ENCODE measurements at regions of chr13 and their contacts with region 1.

Region 1: DNA sequence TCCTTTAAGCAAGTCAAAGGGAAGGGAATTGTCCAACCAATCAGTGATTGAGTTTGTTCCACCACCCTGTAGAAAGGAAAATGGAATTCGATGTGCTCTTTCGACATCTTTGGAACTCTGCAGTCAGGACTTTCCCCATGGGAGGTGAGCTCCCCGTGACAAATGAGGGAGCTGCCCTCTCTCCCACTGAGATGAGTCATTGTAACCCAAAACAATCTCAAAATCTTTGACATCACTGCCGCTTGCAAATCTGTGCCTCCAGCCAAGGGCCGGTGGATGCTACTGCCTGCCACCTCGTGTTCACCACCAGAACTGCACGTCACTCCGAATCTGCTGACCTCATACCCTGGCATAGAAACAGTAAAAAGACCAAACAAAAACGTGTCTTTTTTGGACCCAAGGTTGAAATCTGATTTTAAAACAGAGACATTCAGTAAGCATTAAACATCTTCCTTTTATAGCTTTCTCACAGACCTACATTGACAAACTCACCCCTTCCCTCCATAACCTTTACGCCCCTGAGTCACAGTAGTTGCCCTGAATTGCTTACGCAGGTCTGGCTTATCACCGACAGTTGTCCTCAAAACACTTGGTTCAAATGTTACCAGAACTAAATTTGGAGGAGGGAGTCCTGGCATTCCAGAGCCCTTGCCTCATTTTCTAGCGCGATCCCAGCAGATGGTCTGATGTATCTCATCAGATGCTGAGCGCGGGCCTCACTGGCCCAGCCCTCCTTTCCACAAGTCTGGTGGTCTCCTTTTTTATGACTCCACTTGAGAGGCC is 105.2 kb downstream of the COL4A2 start:
- DNase-seq: peak; percentile 97
- H3K4me3 ChIP-seq: no peak overlapping the region
- H3K27ac ChIP-seq: peak overlapping the region; percentile 35
- H3K4me1 ChIP-seq: peaks cover 40% of the 10 kb centered on the region
- H3K27me3 ChIP-seq: no peaks in the 10 kb centered on the region
- CTCF ChIP-seq: peak; percentile 90 to 92

Region 2: DNA sequence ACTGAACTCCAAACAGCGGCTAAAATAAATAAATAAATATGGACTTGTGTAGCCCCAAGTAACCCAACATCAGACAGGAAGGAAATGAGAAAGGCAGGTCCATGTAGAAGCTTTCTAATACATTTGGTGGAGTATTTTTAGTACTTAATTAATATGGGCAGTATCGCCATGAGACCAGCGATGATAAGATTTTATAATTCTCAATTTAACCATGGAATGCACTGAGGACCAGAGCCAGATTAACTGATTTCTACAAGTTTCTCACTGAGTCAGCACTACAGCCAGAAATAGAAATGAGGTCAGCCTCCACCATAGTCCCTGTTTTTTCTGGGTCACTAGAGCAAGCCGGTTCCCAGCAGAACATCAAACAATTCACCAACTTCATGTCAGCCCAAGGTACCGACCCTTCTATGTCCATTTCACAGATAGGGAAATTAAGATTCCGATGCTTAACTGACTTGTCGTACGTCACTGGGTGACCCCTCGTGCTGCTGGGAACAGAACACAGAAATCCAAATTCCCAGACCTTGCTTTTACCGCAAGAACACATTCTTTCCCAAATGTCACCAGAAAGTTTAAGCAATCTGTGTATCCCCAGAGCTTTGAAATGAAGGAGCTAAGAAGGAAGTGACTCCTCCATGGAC is 195.8 kb before region 1 on chr13:
- CTCF ChIA-PET with region 1: no interaction called
- dilution Hi-C with region 1: no loop called
- in situ Hi-C with region 1: loop called in 1 of 2 experiments (anchors 10 kb)
- intact Hi-C with region 1: no loop called
- DNase-seq: no peak
- H3K4me3 ChIP-seq: no peak overlapping the region
- H3K27ac ChIP-seq: no peak overlapping the region
- H3K4me1 ChIP-seq: no peaks in the 10 kb centered on the region
- H3K27me3 ChIP-seq: no peaks in the 10 kb centered on the region
- CTCF ChIP-seq: no peak

Region 3: DNA sequence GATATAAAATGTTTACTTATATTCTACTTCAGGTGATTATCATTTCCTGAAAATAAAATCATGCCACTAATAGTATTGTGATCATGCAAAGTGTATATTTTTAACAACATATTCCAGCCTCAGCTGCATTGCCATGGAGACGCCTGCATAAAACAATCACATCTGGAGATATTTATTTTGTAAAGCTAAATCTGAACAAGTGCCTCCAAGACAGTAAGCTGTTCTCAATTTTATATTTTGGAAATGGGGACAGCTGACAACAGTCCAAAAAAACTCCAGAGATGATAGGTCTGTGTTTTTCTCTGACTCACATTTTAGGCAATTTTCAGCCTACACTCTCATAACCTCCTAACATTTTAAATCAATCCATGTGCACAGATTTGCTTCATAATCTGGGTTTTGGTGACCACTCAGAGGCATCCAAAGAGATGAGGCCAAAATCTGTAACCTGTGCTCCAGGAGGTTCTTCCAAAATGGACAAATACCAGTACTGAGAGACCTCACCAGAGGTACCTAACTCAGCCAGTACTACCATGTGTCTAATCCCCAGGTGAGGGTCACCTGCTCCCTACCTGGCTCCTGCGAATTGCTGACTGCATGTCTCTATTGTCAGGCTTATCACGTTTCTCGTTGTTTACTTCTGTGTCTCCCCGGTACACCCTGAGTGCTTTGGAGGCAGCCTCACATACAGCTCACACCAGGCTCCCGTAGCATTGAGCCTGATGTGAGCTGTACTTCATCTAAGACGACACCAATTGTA is 168.1 kb before region 1 on chr13:
- CTCF ChIA-PET with region 1: interaction called, 5 read pairs
- dilution Hi-C with region 1: no loop called
- in situ Hi-C with region 1: loop called in 1 of 2 experiments (anchors 10 kb)
- intact Hi-C with region 1: loop called (anchors 1 kb)
- DNase-seq: no peak
- H3K4me3 ChIP-seq: no peak overlapping the region
- H3K27ac ChIP-seq: no peak overlapping the region
- H3K4me1 ChIP-seq: no peaks in the 10 kb centered on the region
- H3K27me3 ChIP-seq: no peaks in the 10 kb centered on the region
- CTCF ChIP-seq: no peak

Region 4: DNA sequence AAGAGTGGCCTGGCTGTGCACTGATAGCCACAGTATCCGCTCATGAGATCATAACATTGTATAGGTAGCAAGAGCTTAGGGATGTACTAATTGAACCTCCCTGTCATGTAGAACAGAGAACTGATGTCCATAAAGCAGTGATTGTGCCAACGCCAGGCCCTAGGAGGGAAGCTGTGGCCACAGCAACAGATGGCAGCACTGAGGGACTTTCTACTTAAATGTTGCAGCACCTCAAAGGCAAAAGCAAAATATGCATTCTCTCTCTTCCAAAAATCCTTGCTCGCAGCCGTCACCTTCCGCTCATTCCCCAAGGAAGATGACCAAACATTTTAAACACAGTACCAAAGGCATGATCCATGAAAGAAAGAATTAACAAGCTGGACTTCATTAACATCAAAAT is 137.6 kb before region 1 on chr13:
- CTCF ChIA-PET with region 1: no interaction called
- dilution Hi-C with region 1: no loop called
- in situ Hi-C with region 1: no loop called
- intact Hi-C with region 1: loop called (anchors 1 kb)
- DNase-seq: no peak
- H3K4me3 ChIP-seq: no peak overlapping the region
- H3K27ac ChIP-seq: no peak overlapping the region
- H3K4me1 ChIP-seq: no peaks in the 10 kb centered on the region
- H3K27me3 ChIP-seq: no peaks in the 10 kb centered on the region
- CTCF ChIP-seq: peak; percentile 18 to 59

Region 5: DNA sequence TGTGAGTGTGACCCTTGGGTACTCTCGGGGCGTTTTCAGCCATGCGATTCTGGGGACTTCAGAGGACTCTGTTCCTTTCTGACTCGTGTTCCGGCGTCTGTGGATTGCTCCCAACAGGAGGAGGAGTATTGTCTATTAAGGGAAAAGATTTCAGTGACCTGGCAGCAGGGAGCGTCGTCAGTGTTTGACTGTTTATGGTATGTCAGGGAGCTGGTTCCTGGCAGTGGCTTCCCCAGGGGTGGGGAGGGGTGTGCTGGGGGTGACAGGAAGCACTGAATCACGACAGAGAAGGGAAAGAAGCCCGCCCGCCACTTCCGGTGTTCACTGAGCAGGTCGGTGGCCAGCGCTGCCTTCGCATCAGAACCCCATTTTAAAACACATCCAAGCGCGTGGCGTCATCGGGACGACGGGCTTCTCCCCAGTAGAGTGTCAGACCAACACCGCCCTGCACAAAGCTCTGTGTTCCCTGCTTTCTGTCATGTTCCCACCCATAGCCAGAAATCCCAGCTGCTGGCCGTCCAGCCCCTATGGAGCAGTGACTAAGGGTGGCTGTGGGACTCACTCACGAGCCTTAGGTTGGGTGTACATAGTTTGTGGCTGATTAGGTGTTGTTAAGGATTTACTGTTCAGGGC is 71.4 kb before region 1 on chr13:
- CTCF ChIA-PET with region 1: no interaction called
- dilution Hi-C with region 1: no loop called
- in situ Hi-C with region 1: no loop called
- intact Hi-C with region 1: loop called (anchors 1 kb)
- DNase-seq: peak; percentile 53
- H3K4me3 ChIP-seq: no peak overlapping the region
- H3K27ac ChIP-seq: peak overlapping the region; percentile 51
- H3K4me1 ChIP-seq: peaks cover 52% of the 10 kb centered on the region
- H3K27me3 ChIP-seq: no peaks in the 10 kb centered on the region
- CTCF ChIP-seq: no peak

Region 6: GRCh38 chr13:110369400-110369799 is 42.9 kb before region 1 on chr13:
- CTCF ChIA-PET with region 1: no interaction called
- dilution Hi-C with region 1: no loop called
- in situ Hi-C with region 1: no loop called
- intact Hi-C with region 1: loop called (anchors 1 kb)
- DNase-seq: no peak
- H3K4me3 ChIP-seq: no peak overlapping the region
- H3K27ac ChIP-seq: no peak overlapping the region
- H3K4me1 ChIP-seq: peaks cover 19% of the 10 kb centered on the region
- H3K27me3 ChIP-seq: no peaks in the 10 kb centered on the region
- CTCF ChIP-seq: no peak

Region 7: DNA sequence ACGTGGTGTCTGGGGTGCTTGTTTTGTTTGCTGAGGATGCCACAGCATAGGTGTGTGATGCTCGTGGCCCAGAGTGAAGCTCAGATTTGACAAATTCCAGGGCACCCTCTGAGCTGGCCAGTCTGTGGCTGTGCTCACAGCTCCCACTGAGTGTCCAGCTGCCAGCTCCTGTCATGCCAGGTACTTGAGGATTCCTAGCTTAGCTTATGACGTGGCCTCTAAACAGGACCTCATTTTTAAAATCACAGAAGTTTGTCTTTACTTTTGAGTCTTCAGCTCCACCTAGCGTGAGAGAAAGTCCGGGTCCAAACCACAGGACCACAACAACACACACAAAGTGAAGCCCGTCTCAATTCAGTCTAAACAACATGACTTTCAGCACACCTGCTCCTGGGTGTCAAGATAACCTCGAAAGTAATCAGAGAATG is 31.9 kb after region 1 on chr13:
- CTCF ChIA-PET with region 1: no interaction called
- dilution Hi-C with region 1: no loop called
- in situ Hi-C with region 1: no loop called
- intact Hi-C with region 1: loop called (anchors 2 kb)
- DNase-seq: peak; percentile 54
- H3K4me3 ChIP-seq: no peak overlapping the region
- H3K27ac ChIP-seq: no peak overlapping the region
- H3K4me1 ChIP-seq: peaks cover 66% of the 10 kb centered on the region
- H3K27me3 ChIP-seq: no peaks in the 10 kb centered on the region
- CTCF ChIP-seq: peak; percentile 20 to 47

Measured in mammary epithelial cell (primary cell).